Activated CD8-positive, alpha-beta memory T cell treated with anti-CD3 and anti-CD28 coated beads, Interleukin-2, amount 10 ng/mL, durations not matched to agents 7 days and 5 days (primary cell): ENCODE measurements at regions of chr2 and their contacts with region 1.

Region 1: DNA sequence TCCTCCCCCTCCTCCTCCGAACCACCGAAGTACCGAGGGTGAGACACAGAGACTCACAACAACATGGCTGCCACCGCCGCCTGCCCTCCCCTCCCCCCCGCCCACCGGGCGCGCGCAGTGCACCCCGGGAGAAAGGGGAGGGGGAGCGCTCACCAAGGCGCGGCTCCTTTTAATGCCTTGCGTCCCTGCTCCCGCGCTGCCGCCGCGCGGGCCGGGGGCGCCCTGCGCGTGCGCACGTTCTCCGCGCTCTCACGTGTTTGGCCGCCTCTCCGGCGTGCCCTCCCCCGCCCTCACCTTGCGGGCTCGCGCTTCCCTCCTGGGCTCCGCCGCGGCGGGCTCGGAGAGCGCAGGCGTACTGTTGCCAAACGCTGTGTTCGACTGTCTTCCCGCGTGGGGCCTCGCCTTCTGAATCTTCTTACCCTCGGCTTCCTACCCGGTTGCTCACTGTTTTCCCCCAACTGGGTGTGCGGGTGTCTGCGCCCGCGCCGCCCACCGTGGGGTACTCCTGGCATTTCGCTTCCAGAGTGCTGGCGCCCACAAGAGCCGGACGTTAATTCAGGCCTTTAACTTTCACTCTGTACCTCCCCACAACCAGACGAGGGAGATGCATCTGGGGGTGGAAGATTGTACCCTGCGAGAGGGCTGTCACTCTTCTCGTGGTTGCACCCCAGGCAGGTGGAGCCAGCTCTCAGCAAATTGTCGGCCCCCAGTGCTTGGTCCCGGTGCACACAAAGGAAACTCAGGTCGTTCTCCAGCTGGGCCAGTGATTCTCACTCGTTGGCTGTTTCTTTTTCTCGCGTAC is at the start of gene PUM2:
- DNase-seq: peak; percentile 96
- ATAC-seq: peak; percentile 84
- H3K4me3 Mint-ChIP-seq: peak within 1 kb of the TSS; percentile 95
- H3K27ac Mint-ChIP-seq: peak within 1 kb of the TSS; percentile 87
- H3K4me1 Mint-ChIP-seq: peaks cover 31% of the 10 kb centered on the region
- H3K27me3 Mint-ChIP-seq: no peaks in the 10 kb centered on the region
- total RNA-seq, gene PUM2: 120 to 127 TPM

Region 2: DNA sequence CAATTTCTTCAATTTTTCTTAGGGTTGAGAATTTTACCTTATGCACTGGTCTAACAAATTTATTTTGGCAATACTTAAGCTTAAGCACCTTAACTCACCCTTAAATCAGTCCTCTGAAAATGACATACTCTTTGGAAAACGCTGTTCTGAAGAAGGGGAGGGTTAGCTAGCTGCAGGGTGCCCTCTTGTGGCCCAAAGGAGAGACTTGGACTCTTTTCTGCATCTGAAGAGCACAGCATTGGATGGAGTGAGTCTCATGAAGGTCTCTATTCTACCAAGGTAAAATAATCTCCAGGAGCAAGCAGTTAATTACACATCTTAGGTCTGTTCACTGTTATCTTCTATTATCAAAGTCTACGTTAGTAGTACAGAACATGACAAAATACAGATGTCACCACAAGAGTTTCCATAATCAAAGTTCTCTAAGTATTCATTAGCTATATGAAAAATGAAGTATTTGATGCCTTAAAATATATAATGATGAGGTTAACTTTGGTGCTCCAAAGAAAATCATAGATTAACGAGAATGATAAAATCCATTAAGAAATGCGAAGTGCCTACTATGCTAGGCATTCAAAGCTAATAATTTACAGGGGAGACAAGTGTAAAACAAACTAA is 24.7 kb before region 1 on chr2:
- CTCF ChIA-PET with region 1: interaction called, 28 read pairs
- DNase-seq: peak; percentile 67
- ATAC-seq: peak; percentile 81
- H3K4me3 Mint-ChIP-seq: no peak overlapping the region
- H3K27ac Mint-ChIP-seq: peak overlapping the region; percentile 63
- H3K4me1 Mint-ChIP-seq: peaks cover 62% of the 10 kb centered on the region
- H3K27me3 Mint-ChIP-seq: no peaks in the 10 kb centered on the region

Region 3: DNA sequence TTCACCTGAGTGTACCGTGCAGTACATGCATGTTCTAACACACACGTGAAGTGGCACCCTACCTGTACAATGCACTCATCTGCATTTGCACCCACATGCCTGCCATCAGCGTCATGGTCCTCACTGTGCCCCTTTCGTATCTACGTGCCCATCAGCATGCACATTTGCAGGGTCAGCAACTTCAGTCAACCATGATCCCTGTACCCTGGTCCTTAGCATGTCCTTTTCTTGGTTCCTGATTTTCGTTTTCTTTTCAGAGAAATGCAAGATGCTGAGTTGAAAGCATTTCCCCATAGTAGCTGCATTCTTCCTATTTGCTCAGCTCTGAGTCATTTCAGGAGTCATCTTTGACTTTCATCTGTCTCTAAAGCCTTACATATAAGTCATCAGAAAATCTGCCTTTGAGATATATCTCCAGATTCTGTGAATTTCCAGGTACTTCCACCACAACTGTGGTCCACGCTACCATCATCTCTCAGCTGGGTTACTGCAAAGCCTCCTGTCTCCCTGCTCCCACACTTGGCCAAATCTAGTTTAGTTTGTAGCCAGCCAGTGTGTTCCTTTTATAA is 14.4 kb after region 1 on chr2:
- CTCF ChIA-PET with region 1: interaction called, 44 read pairs
- DNase-seq: peak; percentile 90
- ATAC-seq: peak; percentile 84
- H3K4me3 Mint-ChIP-seq: peak overlapping the region; percentile 50
- H3K27ac Mint-ChIP-seq: peak overlapping the region; percentile 80
- H3K4me1 Mint-ChIP-seq: peaks cover 37% of the 10 kb centered on the region
- H3K27me3 Mint-ChIP-seq: no peaks in the 10 kb centered on the region

Region 4: DNA sequence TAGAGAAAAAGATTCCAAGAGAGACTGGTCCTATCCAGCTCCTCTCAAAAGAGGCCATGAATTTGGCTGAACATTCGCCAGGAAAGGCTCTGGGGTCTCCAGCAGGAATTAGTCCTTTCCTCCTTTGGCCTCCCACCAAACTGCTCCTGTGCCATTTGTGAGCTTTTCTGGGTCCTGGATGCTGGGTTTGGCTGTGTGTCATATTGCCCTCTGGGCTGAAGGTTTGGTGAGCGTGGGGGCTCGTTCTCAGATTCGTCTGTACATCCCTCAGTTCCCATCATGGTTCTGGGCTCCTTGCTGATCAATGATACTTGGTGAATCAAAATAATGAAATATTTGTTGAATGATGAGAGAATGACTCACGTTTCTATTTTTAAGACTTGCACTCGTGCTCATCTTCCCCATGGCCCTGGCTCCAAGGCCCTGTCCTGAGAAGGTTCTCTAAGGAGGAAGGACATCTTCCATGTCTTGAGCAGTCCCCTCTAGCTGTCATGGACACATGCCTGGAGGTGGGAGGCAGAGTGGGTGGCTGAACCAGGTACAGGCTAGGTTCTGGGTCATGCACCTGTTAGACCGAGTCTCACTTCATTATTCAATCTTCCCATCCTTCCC is 48.1 kb after region 1 on chr2:
- CTCF ChIA-PET with region 1: no interaction called
- DNase-seq: no peak
- ATAC-seq: no peak
- H3K4me3 Mint-ChIP-seq: no peak overlapping the region
- H3K27ac Mint-ChIP-seq: no peak overlapping the region
- H3K4me1 Mint-ChIP-seq: no peaks in the 10 kb centered on the region
- H3K27me3 Mint-ChIP-seq: peaks cover 26% of the 10 kb centered on the region